ENCODE measurements at regions of chr2 and their contacts with region 1.

Region 1: DNA sequence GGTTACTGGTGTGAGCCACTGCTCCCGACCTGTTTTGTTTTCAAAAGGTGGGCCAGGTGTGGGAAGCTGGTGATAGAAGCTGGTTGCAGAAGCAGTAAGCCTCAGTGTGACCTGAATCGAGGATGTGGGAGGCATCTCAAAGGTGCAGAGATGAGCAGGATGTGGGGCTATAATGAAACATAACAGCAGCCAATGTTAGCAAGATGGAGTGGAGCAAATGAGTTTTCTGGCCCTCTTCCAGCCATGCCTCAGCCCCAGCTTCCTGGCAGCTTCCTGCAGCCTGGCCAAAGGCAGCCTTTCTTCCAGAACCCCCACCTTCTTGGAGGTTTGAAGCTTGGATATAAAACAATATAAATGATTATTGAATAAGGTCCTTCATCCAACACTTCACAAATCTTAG is 184.8 kb downstream of the NCK2 start:
- DNase-seq: no peak
- H3K4me3 Mint-ChIP-seq: no peak overlapping the region
- H3K27ac Mint-ChIP-seq: no peak overlapping the region
- H3K4me1 Mint-ChIP-seq: peaks cover 25% of the 10 kb centered on the region
- H3K27me3 Mint-ChIP-seq: no peaks in the 10 kb centered on the region
- CTCF ChIP-seq: no peak

Region 2: DNA sequence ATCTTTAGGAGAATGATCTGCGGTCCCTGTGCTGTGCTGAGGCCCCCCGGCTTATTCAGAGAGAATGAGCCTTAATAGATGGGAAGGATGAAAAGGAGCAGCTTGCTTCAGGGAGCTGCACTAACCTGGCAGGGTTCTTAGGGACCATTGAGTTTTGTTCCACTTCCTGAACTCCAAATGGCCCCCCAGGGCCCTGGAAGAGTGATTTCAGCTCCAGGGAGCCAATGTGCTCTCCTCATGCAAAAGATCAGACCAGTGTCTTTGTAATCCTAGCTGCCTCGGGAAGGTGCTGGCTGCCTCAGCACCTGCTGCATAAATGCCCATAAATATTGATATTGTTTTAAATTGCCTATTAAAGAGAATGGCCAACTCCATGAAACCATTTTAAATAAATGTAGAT is 25.4 kb after region 1 on chr2:
- CTCF ChIA-PET with region 1: no interaction called
- intact Hi-C with region 1: no loop called
- DNase-seq: no peak
- H3K4me3 Mint-ChIP-seq: no peak overlapping the region
- H3K27ac Mint-ChIP-seq: no peak overlapping the region
- H3K4me1 Mint-ChIP-seq: peaks cover 8% of the 10 kb centered on the region
- H3K27me3 Mint-ChIP-seq: no peaks in the 10 kb centered on the region
- CTCF ChIP-seq: no peak

Region 3: DNA sequence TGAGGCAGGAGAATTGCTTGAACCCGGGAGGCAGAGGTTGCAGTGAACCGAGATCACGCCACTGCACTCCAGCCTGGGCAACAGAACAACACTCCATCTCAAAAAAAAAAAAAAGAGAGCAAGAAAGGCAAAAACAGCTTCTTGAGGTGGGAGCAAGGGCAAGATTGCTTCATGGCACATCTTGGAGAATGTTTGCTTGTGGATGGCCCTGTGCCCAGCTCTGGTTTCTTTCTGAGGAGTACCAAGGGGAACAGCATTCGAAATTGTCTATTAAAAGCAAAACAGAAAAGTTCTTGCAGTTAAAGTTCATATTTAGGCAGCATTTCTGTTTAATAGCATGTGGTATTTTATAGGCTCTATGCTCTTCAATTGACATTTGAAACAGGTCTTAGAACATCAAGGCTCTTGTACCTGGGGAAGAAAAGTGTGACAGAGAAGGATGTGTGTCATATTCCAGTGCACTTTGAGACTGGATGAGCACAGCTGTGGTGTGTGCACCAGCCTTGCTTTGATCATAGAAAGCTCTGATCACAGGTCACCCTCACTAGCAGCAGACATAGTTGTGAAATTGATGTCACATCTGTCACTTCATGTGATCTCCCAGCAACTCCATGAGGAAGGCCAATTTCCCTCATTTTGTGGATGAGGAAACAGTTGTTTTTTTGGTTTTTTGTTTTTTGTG is 110.3 kb after region 1 on chr2:
- CTCF ChIA-PET with region 1: no interaction called
- intact Hi-C with region 1: loop called (anchors 5 kb)
- DNase-seq: no peak
- H3K4me3 Mint-ChIP-seq: no peak overlapping the region
- H3K27ac Mint-ChIP-seq: no peak overlapping the region
- H3K4me1 Mint-ChIP-seq: no peaks in the 10 kb centered on the region
- H3K27me3 Mint-ChIP-seq: no peaks in the 10 kb centered on the region
- CTCF ChIP-seq: no peak

Measured in Calu3 (cell line).